GM23248 (cell line): ENCODE measurements at regions of chr4 and their contacts with region 1.

Region 1: DNA sequence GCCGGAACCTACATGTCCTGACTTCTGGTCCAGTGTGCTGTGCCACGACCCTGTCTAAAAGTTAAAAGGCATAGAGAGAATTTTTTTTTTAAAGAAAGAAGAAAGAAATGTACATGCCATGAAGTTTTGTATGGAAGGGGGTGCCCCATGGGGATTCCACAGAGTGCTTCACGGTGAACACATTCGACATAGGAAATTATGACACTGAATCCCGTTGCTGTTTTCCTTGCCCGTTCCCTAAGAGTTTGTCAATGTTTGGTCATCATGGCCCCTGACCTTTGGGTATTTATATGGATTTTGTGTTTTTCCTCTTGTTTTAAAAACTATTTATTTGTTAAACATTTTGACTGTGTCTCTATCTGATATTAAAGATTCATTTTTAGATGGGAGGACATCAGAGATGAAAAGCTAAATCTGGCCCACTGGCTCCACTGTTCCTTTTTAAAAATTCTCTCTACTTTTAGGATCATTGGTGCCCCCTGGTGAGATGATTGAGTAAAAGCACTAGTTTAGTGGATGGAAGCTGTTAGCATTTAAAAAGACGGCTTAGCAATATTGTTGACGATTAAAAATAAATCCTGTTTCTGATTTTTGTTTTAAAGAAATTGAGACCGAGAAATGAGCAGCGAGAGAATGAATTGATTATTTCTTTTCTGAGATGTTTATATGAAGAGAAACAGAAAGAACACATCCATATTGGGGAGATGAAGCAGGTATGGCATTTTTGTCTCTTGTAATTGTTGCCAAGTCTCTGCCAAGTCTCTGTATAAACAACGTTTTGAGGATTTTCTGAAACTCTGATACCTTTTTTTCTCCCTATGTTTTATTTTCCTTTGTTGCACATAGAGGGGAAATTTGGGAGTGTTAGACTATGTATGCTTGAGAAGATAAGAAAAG is 75.0 kb downstream of the PTTG2 start:
- DNase-seq: peak; percentile 76
- H3K4me3 ChIP-seq: no peak overlapping the region
- H3K27ac ChIP-seq: no peak overlapping the region
- H3K4me1 ChIP-seq: no peaks in the 10 kb centered on the region
- H3K27me3 ChIP-seq: no peaks in the 10 kb centered on the region

Region 2: DNA sequence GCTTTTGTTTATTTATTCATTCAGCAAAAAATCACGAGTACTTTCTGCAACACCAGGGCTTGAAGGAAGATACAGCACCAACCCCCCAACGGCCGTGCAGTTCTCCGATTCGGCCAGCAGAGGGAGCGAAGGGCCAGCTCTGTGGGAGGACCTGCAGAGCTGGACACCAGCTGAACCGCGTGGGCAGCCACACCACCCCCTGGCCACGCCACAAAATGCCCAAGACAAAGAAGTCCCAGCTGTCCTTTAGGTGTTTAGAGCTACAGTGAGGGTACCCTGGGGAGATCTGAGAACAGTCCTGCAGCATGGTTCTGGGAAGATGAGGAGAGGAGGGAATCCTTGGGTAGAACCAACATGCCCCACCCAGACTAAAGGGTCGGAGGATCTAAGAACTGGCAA is 432.2 kb before region 1 on chr4:
- in situ Hi-C with region 1: loop called (anchors 10 kb)
- DNase-seq: peak; percentile 71
- H3K4me3 ChIP-seq: no peak overlapping the region
- H3K27ac ChIP-seq: no peak overlapping the region
- H3K4me1 ChIP-seq: peaks cover 10% of the 10 kb centered on the region
- H3K27me3 ChIP-seq: no peaks in the 10 kb centered on the region

Region 3: DNA sequence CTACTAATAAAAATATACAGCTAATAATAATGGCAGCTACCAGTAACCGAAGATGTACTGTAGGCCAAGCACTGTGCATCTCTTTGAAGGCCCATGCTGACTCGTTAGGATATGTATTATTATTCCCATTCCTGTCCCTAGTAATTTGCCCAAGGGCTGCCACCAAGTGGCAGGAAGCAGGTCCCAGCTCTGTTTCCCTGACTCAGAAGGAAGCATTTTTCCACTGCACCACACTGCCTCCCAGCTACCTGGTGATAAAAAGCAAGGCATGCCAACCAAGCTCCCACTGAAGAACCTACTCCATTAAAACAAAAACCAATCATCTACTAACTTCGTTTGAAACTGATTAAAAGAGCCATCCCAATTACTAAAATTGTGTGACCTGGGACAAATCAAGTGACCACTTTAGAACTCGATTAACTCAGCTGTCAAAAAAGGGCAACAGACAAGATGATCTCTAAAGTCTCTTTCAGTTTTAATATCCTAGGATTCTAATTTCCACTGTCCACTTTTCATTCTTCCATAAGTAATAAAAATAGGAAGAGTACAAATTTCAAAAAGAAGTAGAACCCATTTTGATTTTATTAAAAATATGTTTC is 233.1 kb before region 1 on chr4:
- in situ Hi-C with region 1: loop called (anchors 10 kb)
- DNase-seq: peak; percentile 44
- H3K4me3 ChIP-seq: no peak overlapping the region
- H3K27ac ChIP-seq: no peak overlapping the region
- H3K4me1 ChIP-seq: no peaks in the 10 kb centered on the region
- H3K27me3 ChIP-seq: no peaks in the 10 kb centered on the region